Endothelial cell of umbilical vein (primary cell): ENCODE measurements at regions of chr6 and their contacts with region 1.

Region 1: DNA sequence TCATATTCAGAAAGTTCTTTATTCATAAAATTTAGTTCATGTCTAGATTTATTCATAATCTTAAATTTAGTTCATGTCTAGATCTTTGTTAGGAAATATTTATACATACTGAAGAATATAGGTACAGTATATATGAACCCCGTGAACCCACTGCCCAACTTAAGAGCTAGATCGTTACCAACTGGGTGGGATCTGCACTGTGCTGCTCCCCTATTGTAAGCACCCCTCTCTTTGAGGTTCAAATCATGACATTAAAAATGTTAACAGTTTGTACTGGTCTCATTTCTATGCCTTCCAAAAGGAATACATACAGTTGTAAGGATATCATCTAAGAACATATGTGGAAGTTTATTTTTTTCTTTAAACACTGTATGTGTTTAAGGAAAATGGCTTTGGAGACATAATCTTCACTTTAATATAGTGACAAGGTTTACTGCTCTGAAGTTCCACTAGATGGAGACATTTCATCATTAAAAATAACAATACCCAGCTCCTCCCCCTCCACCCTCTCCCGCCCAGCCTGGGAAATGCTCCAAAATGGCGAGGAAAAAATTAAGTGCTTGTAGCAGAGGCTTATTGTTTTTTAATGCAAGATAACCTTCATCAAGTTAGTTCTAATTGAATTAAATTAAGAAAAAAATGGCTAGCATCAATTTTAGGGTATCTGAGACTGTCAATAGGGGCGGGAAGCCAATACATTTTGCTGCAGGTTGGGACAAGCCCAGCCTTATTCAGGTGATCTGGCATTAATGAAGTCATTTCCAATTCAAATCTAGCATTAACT is 104.1 kb upstream of the TRAF3IP2 start:
- DNase-seq: peak; percentile 84
- H3K4me3 ChIP-seq: no peak overlapping the region
- H3K27ac ChIP-seq: peak overlapping the region; percentile 26
- H3K4me1 ChIP-seq: peaks cover 4% of the 10 kb centered on the region
- H3K27me3 ChIP-seq: no peaks in the 10 kb centered on the region
- CTCF ChIP-seq: peak; percentile 36 to 57
- POLR2A ChIP-seq: no peak

Region 2: DNA sequence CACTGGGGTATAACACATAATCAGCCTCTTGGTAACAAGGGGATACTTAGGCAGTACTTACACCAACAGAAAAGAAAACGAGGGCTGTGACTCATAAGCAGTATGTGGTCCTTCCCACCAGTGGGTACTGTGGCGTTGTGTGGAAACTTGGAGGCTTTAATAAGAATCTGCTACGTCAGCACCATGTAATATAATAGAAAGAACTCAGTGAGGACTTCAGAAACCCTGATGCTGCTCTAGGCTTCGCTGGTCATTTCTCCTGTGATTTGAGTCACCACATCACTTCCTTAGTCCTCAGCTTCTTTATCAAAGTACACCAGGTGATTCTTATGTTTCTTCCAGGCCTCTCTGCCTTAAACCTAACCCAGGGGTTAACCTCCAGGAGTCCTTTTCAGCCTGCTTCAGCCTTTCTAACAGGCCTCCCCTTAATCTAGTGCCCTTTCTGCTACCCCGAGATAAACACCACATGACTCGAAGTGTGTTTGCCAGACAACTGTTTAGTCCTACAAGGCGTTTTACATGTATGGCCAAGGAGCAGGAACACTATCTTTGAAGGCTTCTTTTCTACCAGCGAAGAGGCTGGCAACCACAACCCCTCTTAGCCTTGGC is 94.9 kb after region 1 on chr6:
- CTCF ChIA-PET with region 1: interaction called, 7 read pairs
- POLR2A ChIA-PET with region 1: no interaction called
- dilution Hi-C with region 1: no loop called
- intact Hi-C with region 1: loop called (anchors 5 kb)
- DNase-seq: peak; percentile 81
- H3K4me3 ChIP-seq: no peak overlapping the region
- H3K27ac ChIP-seq: peak overlapping the region; percentile 56
- H3K4me1 ChIP-seq: peaks cover 39% of the 10 kb centered on the region
- H3K27me3 ChIP-seq: no peaks in the 10 kb centered on the region
- CTCF ChIP-seq: no peak
- POLR2A ChIP-seq: no peak

Region 3: DNA sequence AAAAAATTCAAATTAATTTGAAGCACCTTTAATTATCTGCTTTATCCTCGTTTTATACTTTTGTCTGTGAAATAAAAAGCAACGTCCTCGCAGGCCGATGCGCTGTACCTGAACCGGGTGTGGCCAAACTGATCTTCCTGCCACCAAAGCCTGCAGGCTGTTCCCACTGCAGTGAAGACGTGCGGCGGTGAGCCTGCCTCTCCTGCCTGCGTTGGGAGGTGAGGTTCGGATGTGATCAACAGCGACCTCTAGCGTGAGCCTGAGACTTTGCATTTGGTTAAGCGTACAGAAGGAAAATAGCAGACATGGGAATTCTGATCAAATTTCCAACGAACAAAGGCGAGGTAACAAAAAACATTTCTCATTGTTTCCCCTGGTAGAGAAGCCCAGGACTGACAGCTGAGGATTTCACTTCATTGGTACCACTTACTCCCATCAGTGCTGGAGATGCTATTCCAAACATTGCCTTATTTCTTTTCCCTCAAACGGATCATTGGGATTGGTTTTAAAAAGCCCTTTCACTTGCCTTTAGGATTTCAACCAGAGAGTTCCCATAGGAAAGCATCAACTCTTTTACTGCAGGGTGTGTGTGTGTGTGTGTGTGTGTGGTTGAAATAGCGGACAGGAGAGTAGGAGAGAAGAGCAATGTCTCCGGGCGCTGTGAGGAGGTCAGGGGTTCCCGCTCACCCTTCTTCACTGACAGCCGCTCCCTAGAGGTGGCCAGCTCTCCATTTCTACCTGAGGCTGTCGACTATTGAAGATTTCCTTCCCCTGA is 287.5 kb after region 1 on chr6:
- CTCF ChIA-PET with region 1: interaction called, 15 read pairs
- POLR2A ChIA-PET with region 1: no interaction called
- dilution Hi-C with region 1: no loop called
- intact Hi-C with region 1: loop called (anchors 1 kb)
- DNase-seq: peak; percentile 74
- H3K4me3 ChIP-seq: no peak overlapping the region
- H3K27ac ChIP-seq: no peak overlapping the region
- H3K4me1 ChIP-seq: peaks cover 14% of the 10 kb centered on the region
- H3K27me3 ChIP-seq: no peaks in the 10 kb centered on the region
- CTCF ChIP-seq: peak; percentile 88
- POLR2A ChIP-seq: no peak

Region 4: DNA sequence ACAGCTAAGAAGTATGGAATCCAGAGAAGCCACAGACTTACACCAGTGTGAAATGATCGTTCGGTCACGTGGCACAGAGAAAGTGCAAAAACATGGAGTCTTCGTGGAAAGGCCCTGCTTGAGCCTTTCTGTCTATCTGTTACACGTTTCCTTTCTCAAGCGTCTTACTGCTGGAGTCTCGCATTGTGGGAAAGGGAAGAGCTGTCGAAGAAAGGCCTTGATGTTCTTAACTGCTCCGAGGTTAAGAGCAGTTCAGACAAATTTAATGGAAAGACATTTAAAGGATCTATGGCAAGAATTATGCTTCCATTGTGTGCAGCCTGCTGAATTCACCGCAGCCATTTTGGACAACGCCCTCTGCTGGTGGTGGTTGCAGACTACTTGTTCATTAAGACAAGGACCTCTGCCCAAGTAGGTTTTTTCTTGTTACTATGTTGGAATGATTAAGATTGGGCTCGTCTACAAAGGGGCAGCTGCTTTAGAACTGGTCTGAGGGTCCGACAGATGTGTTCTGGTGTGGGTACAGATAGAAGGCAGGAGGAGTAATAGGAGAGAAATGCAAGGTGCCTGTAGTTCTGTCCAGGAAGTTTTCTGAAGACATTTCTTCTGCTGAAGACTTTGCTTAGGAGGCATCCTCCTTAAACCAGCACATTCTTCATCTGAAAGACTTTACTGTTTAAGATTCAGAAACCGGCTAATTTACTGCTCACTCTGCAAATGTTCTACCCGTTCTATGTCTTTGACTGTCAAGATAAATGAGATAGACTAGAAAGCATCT is 319.4 kb after region 1 on chr6:
- CTCF ChIA-PET with region 1: interaction called, 15 read pairs
- POLR2A ChIA-PET with region 1: no interaction called
- dilution Hi-C with region 1: no loop called
- intact Hi-C with region 1: loop called (anchors 1 kb)
- DNase-seq: peak; percentile 77
- H3K4me3 ChIP-seq: no peak overlapping the region
- H3K27ac ChIP-seq: no peak overlapping the region
- H3K4me1 ChIP-seq: no peaks in the 10 kb centered on the region
- H3K27me3 ChIP-seq: peaks cover 0 to 2% of the 10 kb centered on the region in 2 experiments
- CTCF ChIP-seq: peak; percentile 72 to 87
- POLR2A ChIP-seq: no peak